ENCODE measurements at regions of chr1 and their contacts with region 1.

Region 1: GRCh38 chr1:220527908-220528678 is at the start of gene MARK1:
- DNase-seq: peak; percentile 82 to 83
- ATAC-seq: peak; percentile 91 to 94 (median 93)
- H3K4me3 ChIP-seq: peak within 1 kb of the TSS; percentile 71 to 95 (median 84)
- H3K27ac ChIP-seq: peak within 1 kb of the TSS; percentile 84 to 95 (median 93)
- H3K4me1 ChIP-seq: peaks cover 0 to 29% (median 11%) of the 10 kb centered on the region in 9 donors
- H3K27me3 ChIP-seq: peaks cover 0 to 67% (median 5%) of the 10 kb centered on the region in 7 donors
- CTCF ChIP-seq: no peak
- total RNA-seq, gene MARK1: 11.3 to 19.0 (median 15.5) TPM

Region 2: GRCh38 chr1:220300442-220301121 is 227.5 kb before region 1 on chr1:
- intact Hi-C with region 1: loop called in 4 of 10 experiments (anchors 5 to 10 kb)
- DNase-seq: peak; percentile 42 to 84
- ATAC-seq: peak; percentile 83 to 99 (median 96)
- H3K4me3 ChIP-seq: peak overlapping the region in 6 of 10 donors; percentile 1 to 40 (median 30)
- H3K27ac ChIP-seq: peak overlapping the region in 9 of 10 donors; percentile 41 to 82 (median 78)
- H3K4me1 ChIP-seq: peaks cover 0 to 23% (median 14%) of the 10 kb centered on the region in 9 donors
- H3K27me3 ChIP-seq: no peaks in the 10 kb centered on the region
- CTCF ChIP-seq: no peak

Region 3: DNA sequence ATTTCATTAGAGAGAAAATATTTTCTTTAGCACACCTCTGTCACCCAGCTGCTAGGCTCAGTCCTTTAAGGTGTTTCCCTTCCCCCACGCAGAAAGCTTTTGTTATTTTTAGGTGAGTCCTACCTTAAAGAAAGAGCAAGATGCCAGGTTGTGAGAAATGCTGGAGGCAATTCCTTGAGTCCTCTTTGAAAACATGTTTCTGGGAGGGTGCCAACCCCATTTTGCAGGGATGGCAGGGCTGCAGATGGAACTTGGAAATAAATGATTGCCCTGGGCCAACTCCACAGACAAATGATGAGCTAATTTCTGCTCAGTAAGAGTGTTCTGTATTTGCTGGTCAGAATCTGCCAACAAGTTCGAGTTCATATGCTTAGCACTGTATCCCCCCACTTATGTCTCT is 136.6 kb before region 1 on chr1:
- intact Hi-C with region 1: no loop called
- DNase-seq: no peak
- ATAC-seq: no peak
- H3K4me3 ChIP-seq: no peak overlapping the region
- H3K27ac ChIP-seq: no peak overlapping the region
- H3K4me1 ChIP-seq: no peaks in the 10 kb centered on the region
- H3K27me3 ChIP-seq: no peaks in the 10 kb centered on the region
- CTCF ChIP-seq: no peak

Measured in heart right ventricle (tissue), 16 donors.